ENCODE measurements at regions of chr17 and their contacts with region 1.

Region 1: DNA sequence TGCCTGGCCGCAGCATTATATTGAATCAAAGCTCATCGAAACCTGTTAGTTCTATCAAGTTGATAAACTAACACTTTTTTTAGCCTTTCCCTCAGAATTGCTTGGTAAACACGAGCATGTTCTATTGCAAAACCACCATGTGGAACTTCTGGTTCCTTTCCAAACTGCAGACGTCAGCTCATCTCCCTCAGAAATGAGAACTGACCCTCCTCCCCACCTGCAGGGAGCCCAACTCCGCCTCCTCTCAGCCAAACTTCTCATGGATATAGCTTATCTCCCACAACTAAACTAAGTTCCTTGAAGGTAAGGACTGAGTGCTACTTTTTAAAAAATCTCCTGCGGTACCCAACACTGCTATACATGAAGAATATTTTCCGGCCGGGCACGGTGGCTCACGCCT is 6.7 kb downstream of the SHMT1 start:
- DNase-seq: no peak
- H3K4me3 ChIP-seq: no peak overlapping the region
- H3K27ac ChIP-seq: peak overlapping the region in 42 of 59 donors; percentile 5 to 78 (median 51)
- H3K27me3 ChIP-seq: no peaks in the 10 kb centered on the region
- CTCF ChIP-seq: no peak

Region 2: GRCh38 chr17:18339933-18340332 is 16.7 kb before region 1 on chr17:
- intact Hi-C with region 1: loop called in 1 of 2 experiments (anchors 2 kb)
- DNase-seq: no peak
- H3K4me3 ChIP-seq: no peak overlapping the region
- H3K27ac ChIP-seq: no peak overlapping the region
- H3K27me3 ChIP-seq: no peaks in the 10 kb centered on the region
- CTCF ChIP-seq: no peak

Region 3: GRCh38 chr17:18377437-18378204 is 21.0 kb after region 1 on chr17 and contains the start of gene EVPLL:
- intact Hi-C with region 1: no loop called
- DNase-seq: peak in 1 of 10 donors; percentile 39
- H3K4me3 ChIP-seq: no peak within 1 kb of the TSS
- H3K27ac ChIP-seq: no peak within 1 kb of the TSS
- H3K27me3 ChIP-seq: peaks cover 0 to 17% (median 0%) of the 10 kb centered on the region in 45 donors
- CTCF ChIP-seq: no peak
- total RNA-seq, gene EVPLL: 0.23 to 0.82 (median 0.39) TPM in 5 of 120 experiments, not detected in the others